GM12878 (cell line): ENCODE measurements at regions of chr18 and their contacts with region 1.

Region 1: DNA sequence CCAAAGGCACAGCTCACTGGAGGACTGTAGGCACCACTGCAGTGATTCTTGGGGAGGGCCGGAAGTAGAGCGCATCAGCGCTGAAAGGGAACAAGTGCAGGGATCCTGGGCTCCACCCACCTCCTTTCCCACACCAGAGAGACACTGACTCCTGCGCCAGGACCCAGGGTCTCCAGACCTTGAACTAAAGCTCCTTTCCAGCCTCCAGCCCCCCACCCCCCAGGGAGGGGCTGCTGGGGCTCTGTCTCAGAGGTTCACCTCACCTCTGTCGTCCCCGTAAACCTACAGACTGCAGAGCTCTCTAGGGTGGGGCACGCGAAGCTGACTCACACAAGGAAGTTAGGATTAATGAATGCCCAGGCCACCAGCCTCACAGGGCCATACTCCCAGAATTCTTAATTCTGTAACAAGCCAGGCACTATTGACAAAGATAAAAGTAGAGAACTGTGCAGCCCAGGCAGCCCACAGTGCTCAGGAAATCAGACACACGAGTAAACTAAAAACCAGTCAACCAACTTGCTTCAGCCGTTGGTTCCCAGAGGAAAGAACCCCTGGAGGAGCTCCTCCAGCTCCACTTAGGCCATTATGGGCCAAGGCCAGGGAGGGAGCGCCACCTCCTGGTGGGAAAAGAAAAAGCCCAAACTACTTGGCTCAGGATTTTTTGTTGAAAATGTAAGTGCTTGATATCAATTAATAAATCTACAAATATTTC is 45.1 kb upstream of the ACAA2 start:
- DNase-seq: no peak
- ATAC-seq: peak; percentile 70
- H3K4me3 ChIP-seq: no peak overlapping the region
- H3K27ac ChIP-seq: no peak overlapping the region
- H3K4me1 ChIP-seq: no peaks in the 10 kb centered on the region
- H3K27me3 ChIP-seq: no peaks in the 10 kb centered on the region; a peak in 1 of 4 replicates
- CTCF ChIP-seq: peak; percentile 80 to 90 (median 84)
- EP300 ChIP-seq: no peak
- POLR2A ChIP-seq: no peak
- RAD21 ChIP-seq: peak; percentile 99

Region 2: DNA sequence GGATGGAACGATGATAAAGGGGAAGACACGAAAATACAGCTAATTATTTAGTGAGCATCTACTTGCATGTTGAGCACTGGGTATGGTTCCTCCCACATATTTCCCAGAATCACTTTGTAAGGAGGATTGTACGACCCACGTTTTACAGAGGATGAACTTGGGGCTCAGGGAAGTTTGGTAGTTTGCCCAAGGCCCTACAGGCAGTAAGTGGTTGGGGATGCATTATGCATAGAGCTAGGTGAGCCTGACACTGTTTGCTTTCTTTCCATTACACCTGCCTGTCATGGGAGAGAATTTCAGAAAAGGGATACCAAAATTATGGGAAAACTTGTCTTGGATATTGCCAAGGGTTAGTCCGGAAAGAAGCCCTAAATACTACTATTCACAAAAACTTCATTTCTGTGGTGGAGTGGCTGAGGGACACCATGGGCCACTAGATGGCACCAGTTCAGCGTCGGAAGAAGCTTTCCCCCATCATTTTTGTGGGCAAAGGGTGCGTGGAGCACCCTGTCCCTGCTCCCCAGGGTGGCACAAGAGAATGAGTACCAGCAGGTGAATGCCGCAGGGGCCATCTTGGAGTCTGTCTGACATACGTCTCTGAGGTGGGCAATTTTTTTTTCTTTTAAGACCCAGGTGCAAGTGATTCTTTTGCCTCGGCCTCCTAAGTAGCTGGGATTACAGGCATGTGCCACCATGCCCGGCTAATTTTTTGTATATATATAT is 347.9 kb before region 1 on chr18:
- CTCF ChIA-PET with region 1: interaction called, 177 read pairs
- POLR2A ChIA-PET with region 1: no interaction called
- RAD21 ChIA-PET with region 1: interaction called, 26 read pairs
- SMC1A ChIA-PET with region 1: interaction called, 63 read pairs
- in situ Hi-C with region 1: loop called (anchors 5 kb)
- intact Hi-C with region 1: loop called (anchors 1 kb)
- DNase-seq: no peak
- ATAC-seq: peak; percentile 92
- H3K4me3 ChIP-seq: no peak overlapping the region
- H3K27ac ChIP-seq: no peak overlapping the region
- H3K4me1 ChIP-seq: no peaks in the 10 kb centered on the region
- H3K27me3 ChIP-seq: no peaks in the 10 kb centered on the region
- CTCF ChIP-seq: peak; percentile 86 to 90 (median 87)
- EP300 ChIP-seq: no peak
- POLR2A ChIP-seq: no peak
- RAD21 ChIP-seq: peak; percentile 82

Region 3: DNA sequence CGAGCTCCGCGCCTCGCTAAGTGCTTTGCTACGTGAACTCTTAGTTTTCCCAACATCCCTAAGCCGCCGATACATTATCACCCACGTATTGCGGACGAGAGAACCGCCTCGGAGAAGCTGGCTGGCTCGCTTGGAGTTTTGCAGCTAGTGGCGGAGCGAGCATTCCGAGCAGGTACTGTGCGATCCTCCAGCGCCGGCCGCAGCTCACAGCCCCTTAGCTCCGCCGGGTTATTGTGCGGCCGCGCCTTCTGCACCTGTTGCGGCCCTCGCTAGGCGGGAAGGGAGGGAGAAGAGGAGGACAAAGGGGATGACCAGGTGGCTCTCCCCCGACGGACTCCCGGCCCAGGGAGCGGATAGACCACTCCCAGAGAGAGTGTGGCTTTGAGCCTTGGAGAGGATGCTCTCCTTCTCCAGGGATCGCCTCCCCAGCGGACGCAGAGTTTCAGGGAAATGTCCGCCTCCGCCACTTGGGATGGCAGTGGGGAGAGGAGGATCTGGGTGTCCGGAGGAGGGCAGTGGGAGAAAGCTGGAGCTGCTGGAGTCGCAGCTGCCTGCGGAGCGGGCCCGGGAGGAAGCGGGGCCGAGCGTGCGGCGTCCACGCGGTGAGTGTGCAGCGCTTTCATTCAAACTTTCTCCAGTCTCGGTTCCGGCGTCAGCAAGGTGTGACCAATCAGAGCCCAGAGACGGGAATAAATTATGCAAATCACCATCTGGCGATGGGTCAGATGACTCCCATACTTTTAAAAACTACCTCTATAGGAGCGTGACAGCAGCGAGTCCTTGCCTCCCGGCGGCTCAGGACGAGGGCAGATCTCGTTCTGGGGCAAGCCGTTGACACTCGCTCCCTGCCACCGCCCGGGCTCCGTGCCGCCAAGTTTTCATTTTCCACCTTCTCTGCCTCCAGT is 296.9 kb before region 1 on chr18 and contains the start of gene LIPG:
- CTCF ChIA-PET with region 1: interaction called, 12 read pairs
- POLR2A ChIA-PET with region 1: no interaction called
- RAD21 ChIA-PET with region 1: no interaction called
- SMC1A ChIA-PET with region 1: interaction called, 10 read pairs
- in situ Hi-C with region 1: loop called (anchors 5 kb)
- intact Hi-C with region 1: loop called (anchors 1 kb)
- DNase-seq: no peak
- ATAC-seq: no peak
- H3K4me3 ChIP-seq: no peak within 1 kb of the TSS
- H3K27ac ChIP-seq: no peak within 1 kb of the TSS
- H3K4me1 ChIP-seq: no peaks in the 10 kb centered on the region
- H3K27me3 ChIP-seq: peaks cover 10 to 16% of the 10 kb centered on the region in 2 experiments; a peak in 3 of 4 replicates
- CTCF ChIP-seq: no peak
- EP300 ChIP-seq: no peak
- POLR2A ChIP-seq: peak; percentile 29; the same call in 1 of the 2 replicates
- RAD21 ChIP-seq: no peak
- polyA plus RNA-seq, gene LIPG: 0.04 to 0.37 TPM

Region 4: DNA sequence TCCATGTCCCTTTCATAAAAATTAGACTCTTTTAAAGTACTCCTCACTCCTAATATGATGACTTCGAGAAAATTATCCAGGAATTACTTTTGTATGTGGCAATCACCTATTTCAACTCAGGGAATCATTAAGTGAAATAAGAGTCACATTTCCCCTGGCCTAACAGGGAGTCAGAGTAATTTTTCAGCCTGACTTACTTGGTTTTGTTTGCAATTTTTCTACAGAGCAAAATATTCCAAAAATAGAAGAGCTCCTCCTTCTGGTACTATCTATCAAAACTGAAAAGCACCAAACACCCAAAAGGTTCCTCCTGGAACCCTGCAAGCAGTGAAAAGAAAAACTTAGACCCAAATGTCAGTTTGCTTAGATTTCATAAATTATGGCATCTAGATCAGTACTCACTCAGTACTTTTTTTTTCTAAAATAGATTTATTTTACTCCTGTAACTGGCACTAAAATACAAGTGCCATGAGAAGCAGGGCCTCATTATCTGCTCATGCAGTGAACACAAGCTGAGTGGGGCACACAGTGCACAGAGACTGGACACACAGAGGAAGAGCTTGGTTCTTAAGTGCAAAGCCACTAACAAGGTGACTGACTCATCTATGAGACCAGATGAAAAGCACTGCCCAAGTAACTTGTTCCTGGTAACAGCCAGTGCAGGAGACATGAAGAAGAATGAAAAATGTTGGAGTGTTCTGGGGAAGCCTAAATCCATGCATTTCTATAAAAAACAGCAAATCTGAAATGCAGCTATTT is 73.9 kb before region 1 on chr18:
- CTCF ChIA-PET with region 1: interaction called, 16 read pairs
- POLR2A ChIA-PET with region 1: no interaction called
- RAD21 ChIA-PET with region 1: interaction called, 3 read pairs
- SMC1A ChIA-PET with region 1: interaction called, 5 read pairs
- in situ Hi-C with region 1: no loop called
- intact Hi-C with region 1: loop called (anchors 5 kb)
- DNase-seq: no peak
- ATAC-seq: no peak
- H3K4me3 ChIP-seq: no peak overlapping the region
- H3K27ac ChIP-seq: no peak overlapping the region
- H3K4me1 ChIP-seq: peaks cover 2% of the 10 kb centered on the region; the same call in 1 of the 2 replicates
- H3K27me3 ChIP-seq: no peaks in the 10 kb centered on the region
- CTCF ChIP-seq: peak in 2 of 3 experiments; percentile 12 to 15; a peak in 1 of 6 replicates
- EP300 ChIP-seq: no peak
- POLR2A ChIP-seq: no peak
- RAD21 ChIP-seq: 0 out of 2 replicates have a peak, but pooled peaks have one; percentile 13

Region 5: DNA sequence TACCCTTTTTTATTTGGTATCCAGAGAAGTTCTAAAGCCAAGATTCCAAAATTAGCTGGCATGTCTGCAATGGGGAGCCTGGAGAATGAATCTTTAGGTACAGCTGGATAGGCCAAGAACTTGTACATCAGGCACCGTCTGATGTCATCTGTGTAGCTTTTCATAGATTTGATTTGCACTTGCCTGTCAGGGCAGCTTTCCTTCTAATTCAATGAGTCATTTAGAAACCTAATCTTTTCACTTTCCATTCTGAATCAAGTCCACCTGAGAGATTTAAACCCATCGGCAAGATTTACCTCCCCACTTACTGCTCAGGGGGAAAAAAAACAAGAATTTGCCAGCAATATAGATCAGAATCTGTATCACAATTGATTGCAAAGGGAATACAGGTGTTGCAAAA is 15.8 kb after region 1 on chr18:
- CTCF ChIA-PET with region 1: interaction called, 23 read pairs
- POLR2A ChIA-PET with region 1: no interaction called
- RAD21 ChIA-PET with region 1: interaction called, 3 read pairs
- SMC1A ChIA-PET with region 1: interaction called, 3 read pairs
- in situ Hi-C with region 1: no loop called
- intact Hi-C with region 1: no loop called
- DNase-seq: no peak
- ATAC-seq: peak; percentile 81
- H3K4me3 ChIP-seq: no peak overlapping the region
- H3K27ac ChIP-seq: no peak overlapping the region
- H3K4me1 ChIP-seq: peaks cover 3% of the 10 kb centered on the region
- H3K27me3 ChIP-seq: peaks cover 0 to 3% of the 10 kb centered on the region in 2 experiments; a peak in 1 of 4 replicates
- CTCF ChIP-seq: no peak
- EP300 ChIP-seq: no peak
- POLR2A ChIP-seq: no peak
- RAD21 ChIP-seq: no peak

Region 6: DNA sequence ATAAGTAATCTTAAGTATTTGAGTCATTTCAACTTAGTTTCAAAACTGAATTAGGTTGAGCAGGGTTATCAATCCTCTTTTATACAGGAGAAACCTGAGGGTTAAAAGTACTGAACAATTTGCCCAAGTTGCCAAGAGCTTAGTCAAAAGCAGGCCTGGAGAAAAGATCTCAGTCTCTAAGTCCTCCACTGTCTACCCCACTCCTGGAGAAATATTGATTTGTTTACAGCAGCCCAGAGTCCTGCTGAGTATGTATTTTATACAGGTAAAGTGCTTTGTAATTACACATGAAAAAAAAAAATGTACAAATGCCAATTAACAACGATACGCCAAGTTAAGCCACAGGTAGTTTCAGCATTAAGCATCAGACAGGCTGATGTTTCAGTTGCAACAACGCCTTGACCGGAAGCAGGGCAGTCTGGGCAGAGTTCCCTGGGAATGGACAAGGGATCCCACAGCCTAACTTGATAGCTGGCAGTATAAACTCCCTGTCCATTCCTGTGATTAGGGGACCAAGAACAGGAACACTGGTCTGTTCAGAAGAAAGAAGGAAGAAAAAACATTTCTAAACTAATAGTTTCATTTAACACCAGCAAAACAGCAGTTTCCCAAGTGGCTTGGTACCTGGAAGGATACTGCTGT is 203.5 kb after region 1 on chr18:
- CTCF ChIA-PET with region 1: no interaction called
- POLR2A ChIA-PET with region 1: no interaction called
- RAD21 ChIA-PET with region 1: no interaction called
- SMC1A ChIA-PET with region 1: no interaction called
- in situ Hi-C with region 1: no loop called
- intact Hi-C with region 1: no loop called
- DNase-seq: no peak
- ATAC-seq: no peak
- H3K4me3 ChIP-seq: no peak overlapping the region
- H3K27ac ChIP-seq: no peak overlapping the region
- H3K4me1 ChIP-seq: no peaks in the 10 kb centered on the region
- H3K27me3 ChIP-seq: peaks cover 0 to 4% of the 10 kb centered on the region in 2 experiments; a peak in 1 of 4 replicates
- CTCF ChIP-seq: no peak
- EP300 ChIP-seq: no peak
- POLR2A ChIP-seq: no peak
- RAD21 ChIP-seq: no peak